ENCODE measurements at regions of chrX and their contacts with region 1.

Region 1: DNA sequence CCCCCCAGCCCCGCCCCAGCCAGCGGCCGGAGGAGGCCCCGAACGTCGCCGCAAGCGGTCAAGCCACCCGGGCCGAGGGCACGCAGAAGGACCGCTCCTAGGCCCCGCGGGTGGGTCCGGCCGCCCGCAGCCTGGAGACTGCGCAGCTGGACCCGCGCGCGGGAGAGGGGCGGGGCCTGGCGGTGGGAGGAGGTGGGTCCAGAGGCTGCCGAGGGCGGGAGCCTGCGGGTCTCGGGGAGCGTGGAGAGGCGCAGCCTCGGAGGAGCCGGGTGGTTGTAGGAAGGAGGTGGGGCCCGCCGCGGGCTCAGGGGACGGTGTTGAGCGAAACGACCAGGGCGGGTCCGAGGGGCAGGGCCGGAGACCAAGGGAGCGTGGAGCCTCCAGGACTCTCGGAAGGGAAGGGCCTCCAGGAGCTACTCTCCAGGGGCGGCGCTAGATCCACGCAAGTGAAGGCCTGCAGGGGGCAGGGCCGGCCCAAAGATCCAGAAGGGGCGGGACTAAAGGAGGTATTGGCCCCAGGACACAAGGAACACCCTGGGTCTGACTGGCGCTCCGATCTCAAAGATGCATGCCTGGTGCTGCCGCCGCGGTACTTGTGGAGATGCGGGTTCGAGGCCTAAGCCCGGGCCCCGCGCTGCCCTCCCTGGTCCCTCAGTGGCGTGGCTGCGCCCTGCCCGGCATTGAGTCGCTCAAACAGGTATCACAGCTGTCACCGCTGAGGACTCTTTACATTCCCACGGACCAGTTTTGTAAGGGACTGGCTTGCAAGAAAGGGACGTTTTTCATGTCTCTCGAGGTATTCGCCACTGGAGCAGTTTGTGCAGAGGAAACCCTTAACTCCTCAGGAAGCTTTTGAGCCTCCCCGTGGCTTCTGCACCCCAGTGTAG is 5.9 kb downstream of the TIMM17B start:
- DNase-seq: peak; percentile 85
- H3K4me3 Mint-ChIP-seq: peak overlapping the region; percentile 80
- H3K27ac Mint-ChIP-seq: peak overlapping the region; percentile 76
- H3K4me1 Mint-ChIP-seq: peaks cover 25% of the 10 kb centered on the region
- H3K27me3 Mint-ChIP-seq: no peaks in the 10 kb centered on the region

Region 2: GRCh38 chrX:48631350-48632090 is 260.1 kb before region 1 on chrX:
- CTCF ChIA-PET with region 1: no interaction called
- intact Hi-C with region 1: loop called (anchors 5 kb)
- DNase-seq: peak; percentile 86
- H3K4me3 Mint-ChIP-seq: no peak overlapping the region
- H3K27ac Mint-ChIP-seq: peak overlapping the region; percentile 36
- H3K4me1 Mint-ChIP-seq: peaks cover 10% of the 10 kb centered on the region
- H3K27me3 Mint-ChIP-seq: no peaks in the 10 kb centered on the region

Region 3: GRCh38 chrX:48648336-48648751 is 243.3 kb before region 1 on chrX:
- CTCF ChIA-PET with region 1: interaction called, 5 read pairs
- intact Hi-C with region 1: loop called (anchors 1 kb)
- DNase-seq: peak; percentile 53
- H3K4me3 Mint-ChIP-seq: no peak overlapping the region
- H3K27ac Mint-ChIP-seq: no peak overlapping the region
- H3K4me1 Mint-ChIP-seq: peaks cover 11% of the 10 kb centered on the region
- H3K27me3 Mint-ChIP-seq: no peaks in the 10 kb centered on the region

Region 4: DNA sequence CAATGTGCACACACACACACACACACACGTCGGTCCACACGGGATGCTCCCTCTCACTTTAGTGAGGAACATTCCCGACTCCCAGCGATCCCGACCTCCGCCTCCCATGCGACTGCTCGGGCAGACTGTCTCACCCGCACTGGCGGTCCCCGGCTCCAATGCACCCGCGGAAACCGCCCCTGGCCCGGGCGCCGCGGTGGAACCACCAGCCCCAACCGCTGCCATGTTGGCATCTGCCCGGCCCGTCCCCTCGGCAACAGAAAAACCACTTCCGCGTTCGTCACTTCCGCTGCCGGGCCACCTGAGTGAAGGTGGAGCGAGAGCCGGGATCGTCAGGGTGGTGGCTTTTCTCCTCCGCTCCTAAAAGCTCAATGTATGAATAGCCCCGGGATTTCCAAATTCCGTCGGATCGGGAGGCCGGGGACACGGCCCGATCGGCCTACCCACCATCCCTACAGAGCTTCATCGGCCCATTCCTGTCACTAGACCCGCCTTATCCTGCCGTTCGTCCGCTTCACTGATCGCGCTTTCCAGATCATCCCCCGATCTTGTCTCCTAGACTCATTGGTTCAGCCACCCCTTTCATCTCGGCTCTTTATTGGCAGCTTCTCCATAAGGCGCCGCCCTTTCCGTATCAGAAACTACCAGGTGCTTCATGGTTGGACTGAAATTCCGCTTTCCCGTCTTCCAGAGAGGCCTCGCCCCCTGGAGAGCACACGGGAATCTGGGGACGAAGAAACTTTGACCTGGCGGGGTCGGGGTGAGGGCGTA is 20.0 kb after region 1 on chrX and contains the start of gene SLC35A2:
- CTCF ChIA-PET with region 1: interaction called, 6 read pairs
- intact Hi-C with region 1: loop called (anchors 1 kb)
- DNase-seq: peak; percentile 92
- H3K4me3 Mint-ChIP-seq: peak within 1 kb of the TSS; percentile 95
- H3K27ac Mint-ChIP-seq: peak within 1 kb of the TSS; percentile 99
- H3K4me1 Mint-ChIP-seq: peaks cover 34% of the 10 kb centered on the region
- H3K27me3 Mint-ChIP-seq: peaks cover 9% of the 10 kb centered on the region
- total RNA-seq, gene SLC35A2: 23.9 to 26.7 TPM

Region 5: GRCh38 chrX:48937054-48937907 is 45.6 kb after region 1 on chrX:
- CTCF ChIA-PET with region 1: interaction called, 3 read pairs
- intact Hi-C with region 1: loop called (anchors 1 kb)
- DNase-seq: peak; percentile 95
- H3K4me3 Mint-ChIP-seq: peak overlapping the region; percentile 75
- H3K27ac Mint-ChIP-seq: peak overlapping the region; percentile 100
- H3K4me1 Mint-ChIP-seq: peaks cover 81% of the 10 kb centered on the region
- H3K27me3 Mint-ChIP-seq: no peaks in the 10 kb centered on the region

Region 6: GRCh38 chrX:48945516-48946348 is 54.1 kb after region 1 on chrX:
- CTCF ChIA-PET with region 1: interaction called, 15 read pairs
- intact Hi-C with region 1: loop called (anchors 1 kb)
- DNase-seq: peak; percentile 70
- H3K4me3 Mint-ChIP-seq: no peak overlapping the region
- H3K27ac Mint-ChIP-seq: peak overlapping the region; percentile 83
- H3K4me1 Mint-ChIP-seq: peaks cover 53% of the 10 kb centered on the region
- H3K27me3 Mint-ChIP-seq: no peaks in the 10 kb centered on the region

Region 7: GRCh38 chrX:49291615-49292337 is 400.1 kb after region 1 on chrX:
- CTCF ChIA-PET with region 1: no interaction called
- intact Hi-C with region 1: no loop called
- DNase-seq: peak; percentile 88
- H3K4me3 Mint-ChIP-seq: no peak overlapping the region
- H3K27ac Mint-ChIP-seq: no peak overlapping the region
- H3K4me1 Mint-ChIP-seq: peaks cover 35% of the 10 kb centered on the region
- H3K27me3 Mint-ChIP-seq: no peaks in the 10 kb centered on the region

Measured in activated naive CD4-positive, alpha-beta T cell treated with anti-CD3 and anti-CD28 coated beads for 36 hours (primary cell).